ENCODE measurements at regions of chr11 and their contacts with region 1.

Region 1: GRCh38 chr11:57379732-57380131 is 1.2 kb downstream of the PRG3 start:
- DNase-seq: no peak
- ATAC-seq: no peak; the same call in 2 of the 3 replicates
- H3K4me3 ChIP-seq: no peak overlapping the region
- H3K27ac ChIP-seq: no peak overlapping the region
- H3K4me1 ChIP-seq: peaks cover 13% of the 10 kb centered on the region
- H3K27me3 ChIP-seq: no peaks in the 10 kb centered on the region
- CTCF ChIP-seq: no peak
- EP300 ChIP-seq: no peak
- POLR2A ChIP-seq: no peak
- RAD21 ChIP-seq: no peak

Region 2: DNA sequence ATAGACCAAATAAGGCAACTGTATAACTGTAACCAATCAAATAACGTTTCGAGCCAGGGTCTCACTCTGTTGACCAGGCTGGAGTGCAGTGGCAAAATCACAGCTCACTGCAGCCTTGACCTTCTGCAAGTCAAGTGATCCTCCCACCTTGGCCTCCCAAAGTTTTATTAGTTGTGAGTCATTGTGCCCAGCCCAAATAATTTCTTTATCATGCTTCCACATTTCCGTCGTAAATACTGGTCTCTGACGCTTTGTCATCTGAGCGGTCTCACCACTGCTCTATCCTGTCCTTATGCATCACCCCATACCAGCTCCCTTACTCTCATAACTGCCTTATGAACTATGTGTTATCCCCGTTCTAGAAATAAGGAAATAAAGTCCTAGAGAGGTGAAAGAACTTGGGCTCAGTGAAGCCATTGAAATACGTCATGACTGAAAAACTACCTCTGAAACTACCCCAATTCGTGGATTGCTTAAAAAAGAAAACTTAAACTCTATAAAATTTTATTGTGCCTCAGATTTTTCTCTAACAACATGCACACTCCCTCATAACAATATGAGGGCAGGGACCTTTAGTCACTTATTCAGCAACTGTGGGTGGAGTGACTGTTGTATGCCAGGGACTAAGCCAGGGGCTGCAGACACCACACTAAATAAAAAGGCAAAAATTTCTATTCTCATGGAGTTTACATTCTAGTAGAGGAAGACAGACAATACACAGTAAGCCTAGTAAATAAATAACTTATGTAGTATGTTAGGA is 64.8 kb after region 1 on chr11:
- CTCF ChIA-PET with region 1: no interaction called
- POLR2A ChIA-PET with region 1: no interaction called
- in situ Hi-C with region 1: loop called (anchors 10 kb)
- intact Hi-C with region 1: no loop called
- DNase-seq: no peak
- ATAC-seq: no peak
- H3K4me3 ChIP-seq: no peak overlapping the region
- H3K27ac ChIP-seq: no peak overlapping the region
- H3K4me1 ChIP-seq: peaks cover 55% of the 10 kb centered on the region
- H3K27me3 ChIP-seq: no peaks in the 10 kb centered on the region
- CTCF ChIP-seq: no peak
- EP300 ChIP-seq: no peak
- POLR2A ChIP-seq: no peak
- RAD21 ChIP-seq: no peak

Measured in HepG2 (cell line).